ENCODE measurements at regions of chr12 and their contacts with region 1.

Region 1: GRCh38 chr12:116525418-116526001 is 33.7 kb upstream of the MAP1LC3B2 start:
- DNase-seq: peak; percentile 82 to 92
- H3K4me3 ChIP-seq: peak overlapping the region; percentile 28 to 35
- H3K27ac ChIP-seq: peak overlapping the region; percentile 49 to 73
- H3K4me1 ChIP-seq: peaks cover 0 to 50% (median 31%) of the 10 kb centered on the region in 4 donors
- H3K27me3 ChIP-seq: no peaks in the 10 kb centered on the region
- CTCF ChIP-seq: no peak

Region 2: GRCh38 chr12:116455540-116456329 is 69.8 kb before region 1 on chr12:
- intact Hi-C with region 1: loop called (anchors 5 kb)
- DNase-seq: peak; percentile 91 to 92
- H3K4me3 ChIP-seq: peak overlapping the region; percentile 5 to 31
- H3K27ac ChIP-seq: peak overlapping the region; percentile 77 to 89
- H3K4me1 ChIP-seq: peaks cover 0 to 26% (median 23%) of the 10 kb centered on the region in 4 donors
- H3K27me3 ChIP-seq: no peaks in the 10 kb centered on the region
- CTCF ChIP-seq: no peak

Region 3: DNA sequence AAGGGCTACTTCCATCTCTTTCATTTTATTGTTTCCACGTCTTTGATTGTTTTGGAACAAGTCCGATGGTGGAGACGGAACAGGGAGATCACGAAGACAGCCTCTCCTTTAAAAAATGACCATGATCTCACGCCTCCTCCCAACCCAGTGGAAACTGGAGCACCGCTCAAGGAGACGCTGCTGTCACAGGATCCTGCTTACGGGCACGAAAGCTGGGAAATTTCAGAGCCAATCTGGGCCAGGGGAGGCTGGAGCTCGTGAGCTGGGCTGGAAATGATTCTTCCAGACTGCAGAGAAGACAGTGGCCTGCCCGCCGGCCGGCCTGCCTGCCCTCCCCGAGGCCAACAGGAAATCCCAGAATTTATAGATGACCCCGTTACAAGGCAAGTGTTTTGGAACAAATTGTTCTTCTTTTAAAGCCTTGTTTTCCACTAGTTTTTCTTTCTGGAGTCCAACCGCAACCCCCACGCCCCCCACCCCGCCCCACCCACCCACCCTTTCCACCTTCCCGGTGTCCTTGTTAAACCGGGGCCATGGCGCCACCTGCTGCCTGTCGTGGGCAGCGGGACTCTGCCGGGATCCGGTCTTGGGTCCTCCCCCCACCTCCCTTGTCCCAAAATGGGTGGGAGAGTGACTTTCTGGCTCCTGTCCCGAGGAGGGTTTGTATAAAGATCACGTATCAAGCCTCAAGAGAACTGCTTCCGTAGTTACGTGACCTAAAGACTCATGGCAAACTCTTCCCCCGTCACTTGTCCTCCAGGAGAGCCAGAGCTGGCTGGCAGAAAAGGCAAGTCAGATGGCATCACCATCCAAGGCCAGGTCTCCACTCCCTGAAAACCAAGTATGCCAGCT is 74.0 kb after region 1 on chr12:
- intact Hi-C with region 1: loop called (anchors 5 kb)
- DNase-seq: peak; percentile 88 to 90
- H3K4me3 ChIP-seq: peak overlapping the region; percentile 33 to 47
- H3K27ac ChIP-seq: peak overlapping the region; percentile 80 to 85
- H3K4me1 ChIP-seq: peaks cover 0 to 41% (median 25%) of the 10 kb centered on the region in 4 donors
- H3K27me3 ChIP-seq: no peaks in the 10 kb centered on the region
- CTCF ChIP-seq: peak; percentile 53 to 70

Measured in tibial artery (tissue), 4 donors.